Caco-2 (cell line): ENCODE measurements at regions of chr9 and their contacts with region 1.

Region 1: DNA sequence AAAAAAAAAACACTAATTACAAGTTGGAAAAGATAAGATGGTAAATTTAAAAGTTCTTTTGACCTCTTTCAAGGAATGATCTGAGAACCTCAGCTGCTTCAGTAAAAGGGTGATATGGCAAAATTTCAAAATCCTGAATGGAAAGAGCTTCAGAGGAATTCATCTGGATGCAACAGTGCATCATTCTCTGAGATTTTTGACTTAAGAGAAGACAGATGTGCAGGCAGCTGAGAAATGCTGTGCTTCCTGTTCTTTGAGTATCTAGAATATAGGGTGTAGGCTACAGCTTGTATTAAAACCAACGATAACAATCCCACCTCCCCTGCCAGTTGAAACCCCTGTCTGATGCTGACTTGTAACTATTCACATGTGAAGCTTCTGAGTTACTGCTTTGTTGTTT is 6.2 kb downstream of the FRMPD1 start:
- DNase-seq: no peak
- H3K4me3 ChIP-seq: no peak overlapping the region
- H3K4me3 Mint-ChIP-seq: no peak overlapping the region
- H3K27ac Mint-ChIP-seq: no peak overlapping the region
- H3K4me1 ChIP-seq: no peaks in the 10 kb centered on the region
- H3K4me1 Mint-ChIP-seq: no peaks in the 10 kb centered on the region
- H3K27me3 ChIP-seq: peaks cover 1% of the 10 kb centered on the region
- H3K27me3 Mint-ChIP-seq: peaks cover 34% of the 10 kb centered on the region
- CTCF ChIP-seq: no peak

Region 2: DNA sequence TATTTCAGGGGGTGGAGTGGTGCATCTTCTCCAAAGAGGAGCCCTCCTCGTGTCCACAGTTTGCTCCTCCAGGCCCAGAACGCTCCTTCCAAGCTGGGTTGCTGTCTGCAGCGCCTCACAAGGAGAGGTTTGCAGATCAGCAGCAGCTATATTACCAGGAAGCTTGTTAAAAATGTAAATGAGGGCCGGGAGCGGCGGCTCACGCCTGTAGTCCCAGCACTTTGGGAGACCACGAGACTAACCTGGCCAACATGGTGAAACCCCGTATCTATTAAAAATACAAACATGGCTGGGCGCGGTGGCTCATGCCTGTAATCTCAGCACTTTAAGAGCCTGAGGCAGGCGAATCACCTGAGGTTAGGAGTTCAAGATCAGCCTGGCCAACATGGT is 31.2 kb before region 1 on chr9:
- CTCF ChIA-PET with region 1: no interaction called
- POLR2A ChIA-PET with region 1: interaction called, 14 read pairs
- intact Hi-C with region 1: no loop called
- DNase-seq: no peak
- H3K4me3 ChIP-seq: no peak overlapping the region
- H3K4me3 Mint-ChIP-seq: no peak overlapping the region
- H3K27ac Mint-ChIP-seq: no peak overlapping the region
- H3K4me1 ChIP-seq: 0 out of 2 replicates have a peak, but pooled peaks cover 8% of the 10 kb centered on the region
- H3K4me1 Mint-ChIP-seq: no peaks in the 10 kb centered on the region
- H3K27me3 ChIP-seq: no peaks in the 10 kb centered on the region
- H3K27me3 Mint-ChIP-seq: peaks cover 3% of the 10 kb centered on the region
- CTCF ChIP-seq: no peak